Activated CD8-positive, alpha-beta memory T cell treated with anti-CD3 and anti-CD28 coated beads, Interleukin-2, amount 10 ng/mL, durations not matched to agents 7 days and 5 days (primary cell): ENCODE measurements at regions of chr4 and their contacts with region 1.

Region 1: GRCh38 chr4:24419181-24420034 is 164.9 kb downstream of the DHX15 start:
- DNase-seq: peak; percentile 68
- ATAC-seq: no peak
- H3K4me3 Mint-ChIP-seq: no peak overlapping the region
- H3K27ac Mint-ChIP-seq: no peak overlapping the region
- H3K4me1 Mint-ChIP-seq: peaks cover 2% of the 10 kb centered on the region
- H3K27me3 Mint-ChIP-seq: no peaks in the 10 kb centered on the region

Region 2: GRCh38 chr4:22897520-22898108 is 1521.8 kb before region 1 on chr4:
- CTCF ChIA-PET with region 1: interaction called, 12 read pairs
- DNase-seq: no peak
- ATAC-seq: no peak
- H3K4me3 Mint-ChIP-seq: no peak overlapping the region
- H3K27ac Mint-ChIP-seq: no peak overlapping the region
- H3K4me1 Mint-ChIP-seq: no peaks in the 10 kb centered on the region
- H3K27me3 Mint-ChIP-seq: no peaks in the 10 kb centered on the region

Region 3: DNA sequence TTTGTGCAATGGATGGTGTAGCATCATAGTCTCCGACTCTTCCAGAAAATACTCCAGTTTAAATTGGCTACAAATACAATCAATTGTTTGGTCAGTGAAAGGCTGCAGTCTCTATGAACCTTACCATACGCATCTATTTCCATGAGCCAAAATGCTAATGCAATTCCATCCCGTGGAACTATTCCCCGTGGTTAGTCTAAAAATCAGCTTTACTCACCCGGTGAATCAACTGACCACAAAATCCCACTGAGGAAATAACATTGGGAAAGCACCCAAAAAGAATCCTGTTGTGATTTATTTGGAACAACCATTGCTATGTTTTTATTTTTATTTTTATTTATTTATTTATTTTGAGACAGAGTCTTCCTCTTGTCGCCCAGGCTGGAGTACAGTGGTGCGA is 77.8 kb after region 1 on chr4:
- CTCF ChIA-PET with region 1: no interaction called
- DNase-seq: no peak
- ATAC-seq: no peak
- H3K4me3 Mint-ChIP-seq: no peak overlapping the region
- H3K27ac Mint-ChIP-seq: no peak overlapping the region
- H3K4me1 Mint-ChIP-seq: no peaks in the 10 kb centered on the region
- H3K27me3 Mint-ChIP-seq: no peaks in the 10 kb centered on the region